OCI-LY7 (cell line): ENCODE measurements at regions of chr5 and their contacts with region 1.

Region 1: GRCh38 chr5:96687812-96688453 is 25.8 kb downstream of the CAST start:
- DNase-seq: peak; percentile 58
- H3K4me3 ChIP-seq: no peak overlapping the region
- H3K27ac ChIP-seq: no peak overlapping the region
- H3K4me1 ChIP-seq: peaks cover 5% of the 10 kb centered on the region
- CTCF ChIP-seq: peak; percentile 91

Region 2: DNA sequence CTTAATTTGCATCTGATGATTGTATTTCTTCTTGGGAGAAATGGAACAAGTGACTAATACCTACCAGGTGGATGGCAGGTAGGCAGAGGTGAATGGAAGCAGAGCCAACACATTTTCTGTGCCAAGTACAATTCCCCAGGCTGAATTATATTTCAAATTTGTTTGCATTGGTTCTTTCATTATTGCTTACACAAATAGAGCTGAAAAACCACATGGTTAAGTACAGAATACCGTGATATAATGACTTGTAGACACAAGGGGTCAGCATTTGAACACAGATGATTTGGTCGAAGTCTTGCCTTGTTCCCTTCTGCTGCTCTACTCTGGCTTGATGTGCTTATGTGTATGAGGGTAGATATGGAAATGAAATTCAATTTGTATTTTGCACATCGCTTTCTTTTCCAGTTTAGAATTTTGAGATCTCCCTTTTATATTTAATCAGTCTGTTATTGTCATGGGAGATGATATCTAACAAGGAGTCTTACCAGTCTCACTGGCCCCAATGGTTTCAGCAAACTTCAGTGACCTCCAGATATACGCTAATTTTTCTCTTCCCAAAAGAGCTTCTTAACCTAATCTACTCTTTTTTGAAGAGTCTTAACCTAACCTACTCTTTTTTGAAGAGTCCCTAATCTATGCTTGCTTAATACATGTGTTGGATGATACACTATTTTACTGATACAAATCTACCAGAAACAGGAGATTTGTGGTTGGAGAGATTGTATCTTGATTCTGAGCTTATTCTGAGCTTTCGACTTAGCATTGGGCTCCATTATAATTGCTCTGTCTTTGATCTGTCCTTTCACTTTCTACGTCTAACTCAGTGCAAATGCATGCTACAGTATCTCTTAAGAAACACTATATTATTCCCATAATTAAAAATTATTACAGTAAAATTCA is 343.0 kb before region 1 on chr5:
- CTCF ChIA-PET with region 1: no interaction called
- POLR2A ChIA-PET with region 1: no interaction called
- intact Hi-C with region 1: loop called (anchors 5 kb)
- DNase-seq: peak; percentile 38
- H3K4me3 ChIP-seq: no peak overlapping the region
- H3K27ac ChIP-seq: no peak overlapping the region
- H3K4me1 ChIP-seq: no peaks in the 10 kb centered on the region
- CTCF ChIP-seq: peak; percentile 67

Region 3: DNA sequence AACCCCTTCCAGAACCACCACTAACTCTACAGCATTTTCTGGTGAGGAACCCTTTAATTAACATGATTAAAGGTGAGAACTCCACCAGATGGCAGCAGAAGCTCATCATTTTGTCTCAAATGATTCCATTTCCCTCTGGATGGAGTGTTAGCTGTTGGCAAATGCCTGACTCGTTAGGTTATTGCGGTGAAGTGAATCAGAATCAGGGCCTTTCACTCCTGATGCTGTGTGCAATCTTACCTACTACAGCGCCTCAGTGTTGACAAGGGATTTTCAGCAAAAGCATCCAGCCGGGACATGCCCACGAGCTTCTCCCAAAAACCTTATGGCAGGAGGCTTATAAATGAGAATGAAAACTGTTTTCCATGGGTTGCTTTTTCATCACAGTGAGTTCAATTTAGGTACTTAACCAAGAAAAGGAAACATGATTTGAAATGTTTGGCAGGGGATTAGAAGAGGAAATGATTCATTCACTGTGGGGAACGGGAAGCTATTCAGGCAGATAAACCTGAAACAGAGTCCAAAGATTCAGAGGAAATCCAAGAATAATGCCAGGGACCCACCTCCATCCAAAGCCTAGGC is 73.7 kb before region 1 on chr5:
- CTCF ChIA-PET with region 1: interaction called, 9 read pairs
- POLR2A ChIA-PET with region 1: interaction called, 6 read pairs
- intact Hi-C with region 1: loop called (anchors 1 kb)
- DNase-seq: peak; percentile 71
- H3K4me3 ChIP-seq: no peak overlapping the region
- H3K27ac ChIP-seq: no peak overlapping the region
- H3K4me1 ChIP-seq: no peaks in the 10 kb centered on the region
- CTCF ChIP-seq: peak; percentile 83

Region 4: GRCh38 chr5:96651948-96652753 is 35.8 kb before region 1 on chr5:
- CTCF ChIA-PET with region 1: no interaction called
- POLR2A ChIA-PET with region 1: interaction called, 3 read pairs
- intact Hi-C with region 1: loop called (anchors 5 kb)
- DNase-seq: peak; percentile 15
- H3K4me3 ChIP-seq: no peak overlapping the region
- H3K27ac ChIP-seq: no peak overlapping the region
- H3K4me1 ChIP-seq: no peaks in the 10 kb centered on the region
- CTCF ChIP-seq: peak; percentile 68

Region 5: DNA sequence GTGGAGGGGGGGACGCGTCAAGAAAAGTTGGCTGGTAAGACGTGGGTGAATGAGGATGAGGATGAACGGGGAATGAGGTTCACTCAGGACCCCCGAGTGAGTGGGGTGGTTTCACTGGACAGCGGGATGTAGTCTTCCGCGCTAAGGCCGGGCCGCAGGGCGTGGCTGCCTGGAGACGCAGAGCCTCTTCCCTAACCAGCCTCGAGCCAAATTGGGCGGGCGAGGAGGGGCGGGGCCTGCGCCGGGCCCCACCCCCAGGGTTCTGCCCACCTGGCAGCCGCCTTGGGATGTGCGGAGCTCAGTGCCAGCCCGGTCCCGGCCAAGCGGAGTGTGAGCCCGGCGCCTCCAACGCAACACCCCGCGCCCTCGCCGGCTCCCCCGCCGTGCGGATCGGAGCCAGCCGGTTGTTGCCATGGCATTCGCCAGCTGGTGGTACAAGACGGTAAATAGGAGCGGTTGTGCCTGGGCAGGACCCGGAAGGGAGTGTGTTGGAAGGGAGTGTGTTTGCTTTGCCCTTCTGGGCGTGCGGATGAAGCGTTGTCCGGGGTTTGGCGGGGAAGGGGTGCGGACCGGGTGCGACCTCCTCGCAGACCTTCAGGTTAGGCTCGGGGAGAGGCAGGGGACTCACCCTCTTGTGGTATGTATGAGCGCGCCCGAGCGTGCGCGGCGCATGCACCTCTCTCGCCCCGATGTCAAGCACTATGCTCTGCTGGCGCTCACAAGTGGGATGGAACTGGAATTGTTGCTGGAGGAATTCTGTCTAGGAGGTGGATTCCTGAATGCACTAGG is 25.0 kb before region 1 on chr5:
- CTCF ChIA-PET with region 1: interaction called, 3 read pairs
- POLR2A ChIA-PET with region 1: interaction called, 10 read pairs
- intact Hi-C with region 1: no loop called
- DNase-seq: peak; percentile 89
- H3K4me3 ChIP-seq: peak overlapping the region; percentile 80
- H3K27ac ChIP-seq: peak overlapping the region; percentile 88
- H3K4me1 ChIP-seq: peaks cover 23% of the 10 kb centered on the region
- CTCF ChIP-seq: no peak

Region 6: DNA sequence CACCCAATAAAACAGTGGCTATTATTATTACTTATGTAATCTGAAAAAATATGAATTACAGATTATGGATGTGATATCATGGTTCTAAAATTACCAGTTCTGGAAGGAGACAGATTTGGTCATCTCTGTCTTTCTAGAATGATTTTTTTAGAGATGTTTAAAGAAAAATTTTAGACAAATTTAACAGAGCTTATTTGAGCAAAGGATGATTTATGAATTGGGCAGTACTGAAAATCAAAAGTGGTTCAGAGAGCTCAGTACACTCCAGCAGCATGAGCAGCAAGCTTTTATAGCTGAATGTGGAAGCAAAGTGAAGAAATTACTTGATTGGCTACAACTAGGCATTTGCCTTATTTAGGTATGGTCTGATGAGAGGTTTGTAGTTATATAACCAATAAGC is 14.8 kb before region 1 on chr5:
- CTCF ChIA-PET with region 1: interaction called, 4 read pairs
- POLR2A ChIA-PET with region 1: interaction called, 10 read pairs
- intact Hi-C with region 1: no loop called
- DNase-seq: no peak
- H3K4me3 ChIP-seq: no peak overlapping the region
- H3K27ac ChIP-seq: no peak overlapping the region
- H3K4me1 ChIP-seq: no peaks in the 10 kb centered on the region
- CTCF ChIP-seq: no peak